Heart left ventricle (tissue), 16 donors: ENCODE measurements at regions of chr10 and their contacts with region 1.

Region 1: DNA sequence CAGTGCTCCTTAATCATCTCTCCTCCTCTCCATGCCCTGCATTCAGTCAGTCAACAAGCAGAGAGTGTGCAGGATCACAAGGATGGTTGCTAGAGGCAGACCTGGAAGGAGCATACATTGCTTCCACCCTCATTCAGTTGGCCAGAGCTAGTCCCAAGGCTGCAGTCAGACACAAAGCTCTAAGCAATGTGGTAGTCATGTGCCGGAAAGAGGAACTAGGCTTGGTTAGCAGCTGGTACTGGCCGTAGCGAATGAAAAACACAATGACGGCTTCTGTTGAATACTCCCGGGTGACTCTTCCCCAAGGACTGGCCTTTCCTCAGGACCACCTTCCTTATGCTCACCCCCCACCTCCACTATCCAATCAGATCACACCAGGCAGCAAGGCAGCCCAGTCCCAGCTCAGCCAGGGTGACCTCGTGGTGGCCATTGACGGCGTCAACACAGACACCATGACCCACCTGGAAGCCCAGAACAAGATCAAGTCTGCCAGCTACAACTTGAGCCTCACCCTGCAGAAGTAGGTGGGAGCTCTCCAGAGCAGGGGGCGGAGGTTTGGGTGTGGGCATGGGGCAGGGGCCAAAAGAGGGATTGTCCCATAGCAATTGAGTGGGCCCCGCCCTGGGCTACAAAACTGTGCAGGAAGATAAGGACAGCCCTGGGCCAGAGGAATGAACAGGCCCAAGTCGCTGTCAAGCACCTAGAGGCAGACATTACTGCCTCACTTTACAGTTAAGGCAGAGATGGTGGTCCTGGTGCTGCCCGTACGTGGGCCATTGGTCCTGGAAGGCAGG is 10.9 kb downstream of the LDB3 start:
- DNase-seq: no peak
- ATAC-seq: no peak
- H3K4me3 ChIP-seq: peak overlapping the region in 4 of 12 donors; percentile 3 to 25 (median 12)
- H3K27ac ChIP-seq: peak overlapping the region in 11 of 12 donors; percentile 13 to 100 (median 91)
- H3K4me1 ChIP-seq: peaks cover 2 to 100% (median 55%) of the 10 kb centered on the region in 12 donors
- H3K27me3 ChIP-seq: peaks cover 0 to 3% (median 0%) of the 10 kb centered on the region in 9 donors
- CTCF ChIP-seq: no peak
- POLR2A ChIP-seq: no peak

Region 2: GRCh38 chr10:86419101-86419500 is 260.1 kb before region 1 on chr10:
- intact Hi-C with region 1: no loop called
- DNase-seq: no peak
- ATAC-seq: no peak
- H3K4me3 ChIP-seq: no peak overlapping the region
- H3K27ac ChIP-seq: no peak overlapping the region
- H3K4me1 ChIP-seq: peaks cover 0 to 5% (median 0%) of the 10 kb centered on the region in 12 donors
- H3K27me3 ChIP-seq: peaks cover 0 to 1% (median 0%) of the 10 kb centered on the region in 9 donors
- CTCF ChIP-seq: no peak
- POLR2A ChIP-seq: no peak

Region 3: GRCh38 chr10:86599729-86600128 is 79.5 kb before region 1 on chr10:
- intact Hi-C with region 1: loop called in 1 of 10 experiments (anchors 10 kb)
- DNase-seq: no peak
- ATAC-seq: peak; percentile 8 to 44 (median 18)
- H3K4me3 ChIP-seq: no peak overlapping the region
- H3K27ac ChIP-seq: no peak overlapping the region
- H3K4me1 ChIP-seq: peaks cover 0 to 4% (median 0%) of the 10 kb centered on the region in 12 donors
- H3K27me3 ChIP-seq: no peaks in the 10 kb centered on the region
- CTCF ChIP-seq: no peak
- POLR2A ChIP-seq: no peak